HEK293 (cell line): ENCODE measurements at regions of chr22 and their contacts with region 1.

Region 1: DNA sequence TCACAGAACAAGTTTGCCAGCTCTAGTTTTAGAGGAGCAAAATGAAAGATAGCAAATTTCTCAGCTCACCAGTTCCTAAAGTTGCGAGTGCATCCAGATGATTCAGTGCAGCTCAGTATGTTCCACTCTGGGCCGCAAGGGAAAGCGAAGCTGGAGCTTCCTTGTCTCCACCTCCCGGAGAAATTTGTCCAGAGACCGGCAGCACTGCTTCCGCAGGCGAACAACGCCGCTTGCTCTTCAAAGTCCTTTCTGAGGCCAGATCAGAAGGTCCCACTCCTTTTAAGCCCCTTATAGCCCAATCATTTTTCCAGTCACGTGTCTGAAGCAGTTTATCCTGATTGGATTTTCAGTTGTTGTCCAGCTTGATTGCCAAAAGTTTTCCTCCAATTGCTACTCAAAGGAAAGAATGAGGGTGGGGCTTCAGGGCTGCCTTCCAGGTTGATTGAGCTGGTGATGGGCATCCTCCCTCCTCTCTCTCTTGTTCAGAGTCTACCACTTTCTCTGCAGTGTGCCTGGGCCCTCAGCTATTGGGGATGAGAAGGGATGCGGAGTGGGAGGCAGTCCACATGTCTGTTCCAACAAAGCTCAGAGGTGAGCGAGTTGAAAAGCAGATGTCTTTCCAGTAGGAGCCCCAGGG is at the start of gene ZNF280A:
- H3K4me3 ChIP-seq: no peak within 1 kb of the TSS
- H3K27ac ChIP-seq: no peak within 1 kb of the TSS
- H3K4me1 ChIP-seq: no peaks in the 10 kb centered on the region
- CTCF ChIP-seq: no peak

Region 2: GRCh38 chr22:22397277-22397870 is 122.8 kb before region 1 on chr22:
- CTCF ChIA-PET with region 1: no interaction called
- POLR2A ChIA-PET with region 1: no interaction called
- H3K4me3 ChIP-seq: no peak overlapping the region
- H3K27ac ChIP-seq: no peak overlapping the region
- H3K4me1 ChIP-seq: no peaks in the 10 kb centered on the region
- CTCF ChIP-seq: no peak

Region 3: DNA sequence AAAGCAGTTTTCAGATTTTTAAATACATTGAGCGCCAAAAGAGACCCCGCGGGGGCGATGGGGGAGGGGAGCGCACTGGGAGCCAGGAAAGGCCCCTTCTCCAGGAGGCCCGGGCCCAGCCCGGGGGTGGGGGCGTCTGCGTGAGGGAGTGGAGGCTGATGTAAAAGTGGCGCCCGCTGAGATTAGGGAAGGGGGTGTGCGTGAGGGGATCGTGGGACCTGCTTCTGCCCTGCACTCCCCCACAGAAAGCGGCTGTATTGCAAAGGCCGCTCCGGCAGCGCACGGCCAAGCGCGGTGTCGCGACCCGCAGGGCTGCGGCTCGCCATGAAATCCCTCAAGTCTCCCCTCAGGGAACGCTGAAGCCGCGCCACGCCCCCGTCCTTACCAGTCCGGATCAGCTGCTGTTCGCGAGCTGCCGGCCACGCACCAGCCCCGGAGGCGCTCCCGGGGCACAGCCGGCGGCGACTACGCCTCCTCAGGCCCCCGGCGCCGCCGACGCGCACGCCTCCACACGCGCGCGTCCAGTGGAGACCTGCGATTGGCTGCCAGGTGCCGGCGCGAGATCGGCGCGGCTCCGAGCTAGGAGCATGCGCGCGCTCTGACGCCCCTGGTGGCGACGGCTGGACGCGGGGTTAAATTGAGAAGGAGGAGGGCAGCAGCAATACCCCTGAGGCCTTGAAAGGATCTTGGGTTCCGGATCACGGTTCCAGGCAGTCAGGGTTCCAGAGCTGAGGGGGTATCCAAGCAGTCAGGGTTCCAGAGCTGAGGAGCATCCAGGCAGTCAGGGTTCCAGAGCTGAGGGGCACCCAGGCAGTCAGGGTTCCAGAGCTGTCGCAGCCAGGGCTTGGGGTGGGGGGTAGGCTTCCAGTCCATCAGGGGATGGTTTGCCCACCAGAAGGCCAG is 11.6 kb before region 1 on chr22 and contains the start of gene ZNF280B:
- CTCF ChIA-PET with region 1: interaction called, 13 read pairs
- POLR2A ChIA-PET with region 1: interaction called, 10 read pairs
- H3K4me3 ChIP-seq: peak within 1 kb of the TSS; percentile 88
- H3K27ac ChIP-seq: peak within 1 kb of the TSS; percentile 0; the same call in 1 of the 2 replicates
- H3K4me1 ChIP-seq: no peaks in the 10 kb centered on the region
- CTCF ChIP-seq: peak; percentile 96